Gastrocnemius medialis (tissue), 4 donors: ENCODE measurements at regions of chr3 and their contacts with region 1.

Region 1: GRCh38 chr3:46935168-46935858 is 41.2 kb downstream of the CCDC12 start:
- DNase-seq: peak; percentile 94 to 99
- ATAC-seq: peak; percentile 92 to 94
- H3K4me3 ChIP-seq: no peak overlapping the region
- H3K27ac ChIP-seq: peak overlapping the region; percentile 90 to 96 (median 92)
- H3K4me1 ChIP-seq: peaks cover 89 to 90% of the 10 kb centered on the region in 2 donors
- H3K27me3 ChIP-seq: no peaks in the 10 kb centered on the region
- CTCF ChIP-seq: peak; percentile 63 to 88 (median 69)
- POLR2A ChIP-seq: peak; percentile 14 to 41

Region 2: GRCh38 chr3:47016934-47017435 is 81.7 kb after region 1 on chr3:
- in situ Hi-C with region 1: no loop called
- intact Hi-C with region 1: loop called (anchors 5 kb)
- DNase-seq: no peak
- ATAC-seq: peak in 1 of 2 donors; percentile 22
- H3K4me3 ChIP-seq: no peak overlapping the region
- H3K27ac ChIP-seq: peak overlapping the region; percentile 39 to 88 (median 66)
- H3K4me1 ChIP-seq: peaks cover 22 to 56% of the 10 kb centered on the region in 2 donors
- H3K27me3 ChIP-seq: no peaks in the 10 kb centered on the region
- CTCF ChIP-seq: no peak
- POLR2A ChIP-seq: no peak